ENCODE measurements at regions of chr3 and their contacts with region 1.

Region 1: GRCh38 chr3:148991194-148992026 is at the start of gene GYG1:
- H3K4me3 Mint-ChIP-seq: peak within 1 kb of the TSS; percentile 97
- H3K27ac Mint-ChIP-seq: peak within 1 kb of the TSS; percentile 90
- H3K4me1 Mint-ChIP-seq: peaks cover 24% of the 10 kb centered on the region
- H3K27me3 Mint-ChIP-seq: no peaks in the 10 kb centered on the region

Region 2: GRCh38 chr3:148902031-148902791 is 89.2 kb before region 1 on chr3:
- intact Hi-C with region 1: no loop called
- H3K4me3 Mint-ChIP-seq: no peak overlapping the region
- H3K27ac Mint-ChIP-seq: no peak overlapping the region
- H3K4me1 Mint-ChIP-seq: no peaks in the 10 kb centered on the region
- H3K27me3 Mint-ChIP-seq: no peaks in the 10 kb centered on the region

Region 3: DNA sequence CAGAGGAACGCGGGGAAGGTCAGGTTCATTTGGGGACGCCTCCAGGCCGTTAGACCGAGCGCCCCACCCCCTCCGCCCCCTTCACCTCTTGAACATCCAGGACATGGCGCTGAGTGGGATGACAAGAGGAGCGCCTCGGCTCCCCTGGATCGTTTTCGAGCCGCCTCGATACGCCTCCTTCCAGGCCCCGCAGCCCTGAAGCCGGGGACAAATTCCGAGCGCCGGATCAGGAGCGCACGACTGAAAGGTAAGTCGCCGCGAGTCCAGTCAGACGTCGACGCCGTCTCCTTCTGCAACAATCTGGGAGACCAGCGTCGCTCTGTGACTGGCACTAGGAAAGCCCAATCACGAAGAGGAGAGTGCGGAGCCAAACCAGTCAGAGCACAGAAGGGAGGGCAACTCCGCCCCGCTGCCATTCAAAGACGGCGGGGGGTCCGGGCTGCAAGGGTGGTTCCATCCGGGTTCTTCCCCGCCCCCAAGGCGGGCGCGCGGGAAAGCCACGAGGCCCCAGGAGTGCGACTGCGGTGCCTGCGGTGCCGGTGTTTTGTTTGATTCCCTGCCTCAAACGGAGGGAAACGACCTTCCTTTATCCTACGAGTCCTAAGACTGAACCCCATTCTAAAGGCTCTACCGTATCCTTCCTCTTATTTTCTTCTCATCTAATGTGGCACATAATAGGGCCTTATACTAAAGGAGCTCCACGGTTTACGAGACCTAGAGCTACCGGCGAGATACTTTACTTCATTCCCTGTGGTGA is 95.0 kb after region 1 on chr3 and contains the start of gene HLTF:
- intact Hi-C with region 1: loop called (anchors 10 kb)
- H3K4me3 Mint-ChIP-seq: peak within 1 kb of the TSS; percentile 95
- H3K27ac Mint-ChIP-seq: peak within 1 kb of the TSS; percentile 78
- H3K4me1 Mint-ChIP-seq: peaks cover 16% of the 10 kb centered on the region
- H3K27me3 Mint-ChIP-seq: no peaks in the 10 kb centered on the region